ENCODE measurements at regions of chr2 and their contacts with region 1.

Region 1: GRCh38 chr2:220687231-220687843 is 884.8 kb downstream of the EPHA4 start:
- DNase-seq: peak; percentile 68
- H3K4me3 Mint-ChIP-seq: no peak overlapping the region
- H3K27ac Mint-ChIP-seq: no peak overlapping the region
- H3K4me1 Mint-ChIP-seq: peaks cover 5% of the 10 kb centered on the region
- H3K27me3 Mint-ChIP-seq: no peaks in the 10 kb centered on the region
- CTCF ChIP-seq: peak; percentile 93

Region 2: DNA sequence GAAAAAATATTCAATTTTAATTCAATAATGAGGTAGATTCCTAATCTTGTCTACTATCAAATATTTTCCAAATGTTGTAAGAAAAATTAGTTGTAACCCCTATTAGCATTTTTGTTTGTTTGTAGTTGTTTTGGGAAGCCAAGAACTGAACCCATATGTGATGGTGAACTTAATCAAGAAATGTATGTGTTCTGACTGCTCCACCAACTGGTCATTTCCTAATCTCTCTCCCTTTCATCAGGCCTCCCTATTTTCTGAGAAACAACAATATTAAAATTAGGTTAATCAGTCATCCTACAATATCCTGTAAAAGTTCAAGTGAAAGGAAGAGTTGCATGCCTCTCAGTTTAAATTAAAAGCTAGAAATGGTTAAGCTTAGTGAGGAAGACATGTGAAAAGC is 380.8 kb after region 1 on chr2:
- CTCF ChIA-PET with region 1: no interaction called
- POLR2A ChIA-PET with region 1: no interaction called
- intact Hi-C with region 1: loop called (anchors 1 kb)
- DNase-seq: no peak
- H3K4me3 Mint-ChIP-seq: no peak overlapping the region
- H3K27ac Mint-ChIP-seq: no peak overlapping the region
- H3K4me1 Mint-ChIP-seq: no peaks in the 10 kb centered on the region
- H3K27me3 Mint-ChIP-seq: no peaks in the 10 kb centered on the region
- CTCF ChIP-seq: no peak